Calu3 (cell line): ENCODE measurements at regions of chr14 and their contacts with region 1.

Region 1: GRCh38 chr14:75982266-75983018 is 647 bp upstream of the TGFB3 start:
- DNase-seq: peak; percentile 81
- H3K4me3 Mint-ChIP-seq: peak overlapping the region; percentile 67
- H3K27ac Mint-ChIP-seq: no peak overlapping the region
- H3K4me1 Mint-ChIP-seq: peaks cover 16% of the 10 kb centered on the region
- H3K27me3 Mint-ChIP-seq: peaks cover 13% of the 10 kb centered on the region
- CTCF ChIP-seq: peak; percentile 65

Region 2: DNA sequence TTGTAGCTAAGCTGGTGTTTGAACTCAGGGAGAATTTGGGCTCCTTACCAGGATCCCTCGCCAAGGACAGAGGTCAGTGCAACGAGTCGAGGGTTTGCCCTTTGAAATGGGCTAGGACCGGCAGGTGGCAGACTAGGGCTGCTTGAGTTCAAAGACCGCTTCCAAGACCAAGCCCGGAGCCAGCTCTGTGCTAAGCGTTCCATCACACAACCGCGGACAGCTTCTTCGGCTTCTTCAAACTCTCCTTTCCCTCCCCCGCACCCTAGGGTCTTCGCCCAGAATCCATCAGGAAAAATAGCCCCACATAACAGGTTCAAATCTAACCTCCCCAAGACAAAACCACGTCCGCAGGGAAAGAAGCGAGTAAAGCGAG is 404.7 kb before region 1 on chr14:
- CTCF ChIA-PET with region 1: interaction called, 7 read pairs
- intact Hi-C with region 1: loop called (anchors 2 kb)
- DNase-seq: peak; percentile 78
- H3K4me3 Mint-ChIP-seq: peak overlapping the region; percentile 74
- H3K27ac Mint-ChIP-seq: no peak overlapping the region
- H3K4me1 Mint-ChIP-seq: peaks cover 9% of the 10 kb centered on the region
- H3K27me3 Mint-ChIP-seq: no peaks in the 10 kb centered on the region
- CTCF ChIP-seq: peak; percentile 61

Region 3: DNA sequence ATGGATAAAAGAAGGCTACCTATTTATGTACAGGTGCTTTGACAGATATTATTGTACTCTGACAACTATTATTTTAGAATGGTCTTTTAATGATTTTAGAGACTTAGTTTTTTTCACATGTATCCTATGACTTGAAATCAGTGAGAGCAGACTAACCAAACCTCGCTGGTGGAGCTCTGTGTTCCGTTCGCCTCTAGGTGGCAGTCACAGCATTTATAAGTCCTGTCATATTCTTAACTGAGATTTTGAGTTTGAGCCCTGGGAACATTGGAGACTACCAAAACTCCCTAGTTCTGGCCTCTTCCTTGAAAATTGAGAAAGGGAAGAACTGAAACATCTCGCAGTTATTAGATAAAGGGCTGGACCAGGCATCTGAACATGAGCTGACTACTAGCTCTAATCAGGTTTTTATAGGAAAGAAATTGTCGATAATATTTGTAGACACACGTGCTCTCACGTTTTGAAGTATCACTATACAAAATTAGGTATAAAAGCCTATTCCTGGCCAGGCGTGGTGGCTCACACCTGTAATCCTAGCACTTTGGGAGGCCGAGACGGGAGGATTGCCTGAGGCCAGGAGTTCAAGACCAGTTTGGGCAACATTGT is 273.1 kb before region 1 on chr14:
- CTCF ChIA-PET with region 1: interaction called, 47 read pairs
- intact Hi-C with region 1: loop called (anchors 1 kb)
- DNase-seq: peak; percentile 54
- H3K4me3 Mint-ChIP-seq: no peak overlapping the region
- H3K27ac Mint-ChIP-seq: no peak overlapping the region
- H3K4me1 Mint-ChIP-seq: peaks cover 17% of the 10 kb centered on the region
- H3K27me3 Mint-ChIP-seq: no peaks in the 10 kb centered on the region
- CTCF ChIP-seq: peak; percentile 20

Region 4: DNA sequence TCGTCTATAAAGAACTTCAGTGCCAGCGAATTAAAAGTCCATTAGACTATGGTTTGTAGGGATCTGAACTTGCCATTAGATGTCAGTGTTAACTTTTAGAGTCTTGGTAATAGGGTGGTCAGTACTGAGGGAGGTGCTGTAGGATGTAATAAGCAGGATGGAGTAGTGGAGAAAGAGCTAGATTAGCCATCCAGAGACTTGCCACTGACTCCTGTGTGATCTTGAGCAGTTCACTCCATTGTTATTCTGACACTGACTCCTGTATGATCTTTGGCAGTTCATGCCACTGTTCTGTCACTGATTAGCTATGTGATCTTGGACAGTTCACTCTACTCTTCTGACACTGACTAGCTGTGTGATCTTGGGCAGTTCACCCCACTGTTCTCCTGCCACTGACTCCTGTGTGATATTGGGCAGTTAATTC is 187.8 kb before region 1 on chr14:
- CTCF ChIA-PET with region 1: interaction called, 4 read pairs
- intact Hi-C with region 1: loop called (anchors 2 kb)
- DNase-seq: no peak
- H3K4me3 Mint-ChIP-seq: no peak overlapping the region
- H3K27ac Mint-ChIP-seq: no peak overlapping the region
- H3K4me1 Mint-ChIP-seq: no peaks in the 10 kb centered on the region
- H3K27me3 Mint-ChIP-seq: no peaks in the 10 kb centered on the region
- CTCF ChIP-seq: no peak

Region 5: GRCh38 chr14:75906676-75907280 is 75.7 kb before region 1 on chr14:
- CTCF ChIA-PET with region 1: interaction called, 32 read pairs
- intact Hi-C with region 1: loop called (anchors 1 kb)
- DNase-seq: peak; percentile 67
- H3K4me3 Mint-ChIP-seq: no peak overlapping the region
- H3K27ac Mint-ChIP-seq: no peak overlapping the region
- H3K4me1 Mint-ChIP-seq: peaks cover 12% of the 10 kb centered on the region
- H3K27me3 Mint-ChIP-seq: no peaks in the 10 kb centered on the region
- CTCF ChIP-seq: peak; percentile 53

Region 6: GRCh38 chr14:75995372-75996041 is 13.1 kb after region 1 on chr14:
- CTCF ChIA-PET with region 1: no interaction called
- intact Hi-C with region 1: no loop called
- DNase-seq: no peak
- H3K4me3 Mint-ChIP-seq: no peak overlapping the region
- H3K27ac Mint-ChIP-seq: no peak overlapping the region
- H3K4me1 Mint-ChIP-seq: no peaks in the 10 kb centered on the region
- H3K27me3 Mint-ChIP-seq: no peaks in the 10 kb centered on the region
- CTCF ChIP-seq: no peak